ENCODE measurements at regions of chr16 and their contacts with region 1.

Region 1: DNA sequence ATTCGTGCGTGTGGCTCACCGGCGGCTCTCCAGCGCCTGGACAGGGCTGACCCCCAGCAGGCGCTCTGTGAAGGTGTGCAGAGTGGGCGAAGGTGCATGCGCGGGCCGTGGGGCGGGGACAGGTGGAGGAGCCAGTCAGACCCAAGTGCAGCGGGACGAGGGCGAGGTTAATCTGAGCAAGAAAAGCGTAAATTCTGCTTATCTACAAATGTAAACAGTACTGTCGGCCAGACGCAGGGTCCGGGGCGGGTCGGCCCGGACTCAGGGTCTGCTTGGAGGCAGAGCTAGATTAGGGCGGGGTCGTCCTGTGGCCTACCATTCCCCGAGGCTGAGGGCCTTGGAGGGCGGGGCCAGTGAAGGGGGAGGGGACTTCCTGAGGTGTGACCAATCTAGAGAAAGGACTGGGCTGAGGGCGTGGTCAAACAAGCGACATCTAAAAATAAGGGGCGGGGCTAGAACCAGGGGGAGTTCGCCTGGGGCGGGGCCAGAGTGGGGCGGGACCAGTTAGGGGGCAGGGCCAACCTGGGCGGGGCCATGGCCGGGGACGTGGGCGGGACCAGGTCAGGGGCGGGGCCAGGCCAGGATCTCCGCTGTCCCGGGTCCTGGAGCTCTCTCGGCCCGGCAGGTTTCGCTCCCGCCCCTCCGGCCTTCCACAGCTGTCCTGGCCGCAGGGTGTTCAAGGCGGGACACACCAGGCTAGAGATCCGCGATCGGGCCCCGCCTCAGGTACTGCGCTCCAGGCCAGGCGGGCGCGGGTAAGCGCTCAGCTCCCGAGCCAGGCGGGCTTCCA is at the start of gene SEC14L5:
- DNase-seq: peak; percentile 99
- total RNA-seq, gene SEC14L5: 0.70 TPM

Region 2: GRCh38 chr16:4624015-4624826 is 333.7 kb before region 1 on chr16 and contains the start of gene MGRN1:
- intact Hi-C with region 1: loop called (anchors 10 kb)
- DNase-seq: peak; percentile 97
- total RNA-seq, gene MGRN1: 45.3 TPM

Region 3: GRCh38 chr16:4734063-4734729 is 223.7 kb before region 1 on chr16 and contains the starts of genes ANKS3 and DNAAF8:
- intact Hi-C with region 1: loop called (anchors 10 kb)
- DNase-seq: peak; percentile 97
- total RNA-seq, gene ANKS3: 9.9 TPM
- total RNA-seq, gene DNAAF8: 0.65 TPM

Region 4: DNA sequence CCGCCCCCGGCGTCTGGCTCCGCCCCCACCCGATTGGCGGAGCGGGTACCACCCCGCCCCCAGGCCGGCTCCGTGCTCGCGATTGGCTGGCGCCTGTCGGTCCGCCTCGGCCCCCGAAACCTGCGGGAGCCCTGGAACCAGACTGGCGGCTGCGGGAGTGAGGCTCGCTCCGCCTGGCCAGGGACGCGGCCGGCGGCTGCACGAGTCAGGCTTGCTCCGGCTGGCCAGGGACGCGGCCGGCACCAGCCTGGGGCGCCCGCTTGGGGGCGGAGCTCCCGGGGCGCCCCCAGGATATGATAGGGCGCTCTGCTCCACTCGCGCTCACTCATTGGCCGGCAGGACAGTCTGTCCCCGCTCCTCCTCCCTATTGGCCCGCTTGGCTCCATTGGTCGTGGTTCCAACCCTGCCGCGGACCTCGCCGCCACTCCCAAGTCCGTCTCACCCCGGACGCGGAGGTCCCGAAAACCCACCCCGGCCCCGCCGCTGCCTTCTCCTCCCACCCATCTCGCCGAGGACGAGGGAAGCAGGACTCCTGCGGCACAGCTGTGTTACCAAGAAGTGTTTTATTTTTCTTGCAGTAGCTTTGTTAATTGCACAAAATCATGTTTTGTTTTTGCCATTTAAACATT is 155.1 kb before region 1 on chr16:
- intact Hi-C with region 1: loop called (anchors 10 kb)
- DNase-seq: peak; percentile 96

Region 5: GRCh38 chr16:5001571-5001970 is 43.7 kb after region 1 on chr16:
- intact Hi-C with region 1: no loop called
- DNase-seq: no peak